Left ventricle myocardium inferior (tissue), 1 donor: ENCODE measurements at regions of chr7 and their contacts with region 1.

Region 1: GRCh38 chr7:30800785-30801252 is 29.6 kb downstream of the MINDY4 start:
- DNase-seq: no peak
- H3K4me3 ChIP-seq: no peak overlapping the region
- H3K27ac ChIP-seq: peak overlapping the region; percentile 13
- H3K4me1 ChIP-seq: peaks cover 77% of the 10 kb centered on the region
- H3K27me3 ChIP-seq: no peaks in the 10 kb centered on the region
- CTCF ChIP-seq: peak; percentile 78

Region 2: GRCh38 chr7:30717181-30717580 is 83.6 kb before region 1 on chr7:
- intact Hi-C with region 1: no loop called
- DNase-seq: no peak
- H3K4me3 ChIP-seq: no peak overlapping the region
- H3K27ac ChIP-seq: no peak overlapping the region
- H3K4me1 ChIP-seq: no peaks in the 10 kb centered on the region
- H3K27me3 ChIP-seq: no peaks in the 10 kb centered on the region
- CTCF ChIP-seq: no peak

Region 3: DNA sequence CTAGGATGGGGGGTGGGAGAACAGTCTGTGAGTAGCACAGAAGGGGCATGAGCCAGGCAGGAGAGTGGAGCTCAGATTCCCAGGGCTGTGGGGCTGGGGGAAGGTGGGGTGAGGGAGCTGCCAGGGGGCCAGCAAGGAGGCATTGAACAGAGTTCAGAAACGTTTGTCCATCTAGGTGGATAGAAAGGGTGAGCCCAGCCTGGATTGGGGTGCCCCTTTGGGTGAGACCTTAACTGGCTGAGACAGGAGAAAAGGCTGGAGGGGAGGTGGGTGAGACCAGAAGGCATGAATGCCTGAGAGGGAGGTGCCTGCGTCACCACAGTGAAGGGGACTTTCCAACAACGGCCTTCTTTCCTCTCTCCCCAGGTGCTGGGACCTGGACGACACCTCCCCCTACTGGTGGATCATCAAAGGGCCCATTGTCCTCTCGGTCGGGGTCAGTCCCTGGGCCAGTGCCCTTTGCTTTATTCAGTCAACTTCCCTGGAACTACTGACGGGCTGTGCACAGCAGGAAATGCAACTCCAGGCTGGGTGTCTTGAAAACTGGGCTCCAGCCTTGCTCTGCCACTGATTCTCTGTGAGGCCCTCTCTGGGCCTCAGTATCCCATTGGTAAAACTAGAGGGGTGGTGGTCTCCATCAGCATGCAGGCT is 173.9 kb after region 1 on chr7:
- intact Hi-C with region 1: loop called (anchors 2 kb)
- DNase-seq: peak; percentile 46
- H3K4me3 ChIP-seq: no peak overlapping the region
- H3K27ac ChIP-seq: no peak overlapping the region
- H3K4me1 ChIP-seq: peaks cover 19% of the 10 kb centered on the region
- H3K27me3 ChIP-seq: peaks cover 48% of the 10 kb centered on the region
- CTCF ChIP-seq: peak; percentile 83

Region 4: GRCh38 chr7:31122649-31123058 is 321.8 kb after region 1 on chr7:
- intact Hi-C with region 1: loop called (anchors 5 kb)
- DNase-seq: peak; percentile 48
- H3K4me3 ChIP-seq: no peak overlapping the region
- H3K27ac ChIP-seq: no peak overlapping the region
- H3K4me1 ChIP-seq: peaks cover 6% of the 10 kb centered on the region
- H3K27me3 ChIP-seq: peaks cover 46% of the 10 kb centered on the region
- CTCF ChIP-seq: peak; percentile 92